Mammary epithelial cell (primary cell): ENCODE measurements at regions of chr2 and their contacts with region 1.

Region 1: GRCh38 chr2:143259368-143259958 is 130.2 kb downstream of the ARHGAP15 start:
- DNase-seq: peak; percentile 38
- H3K4me3 ChIP-seq: no peak overlapping the region
- H3K27ac ChIP-seq: no peak overlapping the region
- H3K4me1 ChIP-seq: no peaks in the 10 kb centered on the region
- H3K27me3 ChIP-seq: peaks cover 2% of the 10 kb centered on the region
- CTCF ChIP-seq: peak; percentile 75 to 87

Region 2: DNA sequence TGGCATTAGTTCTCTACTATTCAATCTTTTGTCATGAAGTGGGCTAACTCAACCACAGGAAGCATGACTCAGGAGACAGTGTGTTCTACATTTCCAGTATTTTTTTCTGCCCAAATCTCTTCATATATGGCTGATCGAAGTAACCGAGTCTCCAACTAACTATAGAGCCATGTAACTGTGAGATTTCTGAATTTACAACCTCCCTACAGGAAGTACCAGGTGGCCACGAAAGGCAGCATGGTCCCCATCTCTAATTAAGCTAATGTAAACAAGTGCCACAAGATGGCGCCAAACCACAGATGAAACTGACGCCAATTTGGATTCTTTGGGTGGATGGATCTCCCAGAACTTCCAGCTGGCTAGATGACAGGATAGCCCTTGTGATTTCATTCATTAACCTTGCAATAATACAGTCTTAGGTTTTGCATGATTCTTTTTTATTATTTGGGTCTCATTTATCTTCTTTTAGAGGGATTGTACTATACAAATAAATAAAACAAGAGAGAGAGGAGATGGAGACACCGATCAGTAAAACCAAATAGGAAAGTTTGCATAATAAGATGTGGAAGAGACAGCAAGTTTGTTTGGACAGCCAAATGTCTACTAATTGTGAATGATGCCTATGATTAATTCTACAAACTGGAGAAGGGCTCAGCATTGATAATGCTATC is 148.6 kb before region 1 on chr2:
- CTCF ChIA-PET with region 1: interaction called, 4 read pairs
- dilution Hi-C with region 1: no loop called
- in situ Hi-C with region 1: no loop called
- intact Hi-C with region 1: loop called (anchors 1 kb)
- DNase-seq: peak; percentile 45
- H3K4me3 ChIP-seq: no peak overlapping the region
- H3K27ac ChIP-seq: no peak overlapping the region
- H3K4me1 ChIP-seq: peaks cover 7% of the 10 kb centered on the region
- H3K27me3 ChIP-seq: no peaks in the 10 kb centered on the region
- CTCF ChIP-seq: peak; percentile 70 to 74

Region 3: GRCh38 chr2:143162123-143162837 is 97.2 kb before region 1 on chr2:
- CTCF ChIA-PET with region 1: no interaction called
- dilution Hi-C with region 1: no loop called
- in situ Hi-C with region 1: no loop called
- intact Hi-C with region 1: loop called (anchors 1 kb)
- DNase-seq: peak; percentile 21
- H3K4me3 ChIP-seq: no peak overlapping the region
- H3K27ac ChIP-seq: no peak overlapping the region
- H3K4me1 ChIP-seq: no peaks in the 10 kb centered on the region
- H3K27me3 ChIP-seq: peaks cover 2% of the 10 kb centered on the region
- CTCF ChIP-seq: peak; percentile 45 to 64

Region 4: GRCh38 chr2:143193121-143193520 is 66.3 kb before region 1 on chr2:
- CTCF ChIA-PET with region 1: no interaction called
- dilution Hi-C with region 1: no loop called
- in situ Hi-C with region 1: no loop called
- intact Hi-C with region 1: no loop called
- DNase-seq: no peak
- H3K4me3 ChIP-seq: no peak overlapping the region
- H3K27ac ChIP-seq: no peak overlapping the region
- H3K4me1 ChIP-seq: no peaks in the 10 kb centered on the region
- H3K27me3 ChIP-seq: peaks cover 3% of the 10 kb centered on the region
- CTCF ChIP-seq: no peak

Region 5: GRCh38 chr2:143205106-143205764 is 54.2 kb before region 1 on chr2:
- CTCF ChIA-PET with region 1: no interaction called
- dilution Hi-C with region 1: no loop called
- in situ Hi-C with region 1: no loop called
- intact Hi-C with region 1: loop called (anchors 1 kb)
- DNase-seq: peak; percentile 50
- H3K4me3 ChIP-seq: no peak overlapping the region
- H3K27ac ChIP-seq: no peak overlapping the region
- H3K4me1 ChIP-seq: no peaks in the 10 kb centered on the region
- H3K27me3 ChIP-seq: no peaks in the 10 kb centered on the region
- CTCF ChIP-seq: peak; percentile 27 to 46